ENCODE measurements at regions of chr10 and their contacts with region 1.

Region 1: GRCh38 chr10:17787078-17787961 is 21.8 kb upstream of the MRC1 start:
- DNase-seq: peak; percentile 54 to 86
- H3K4me3 ChIP-seq: no peak overlapping the region
- H3K27ac ChIP-seq: no peak overlapping the region
- H3K4me1 ChIP-seq: peaks cover 9% of the 10 kb centered on the region
- H3K27me3 ChIP-seq: no peaks in the 10 kb centered on the region
- CTCF ChIP-seq: no peak

Region 2: DNA sequence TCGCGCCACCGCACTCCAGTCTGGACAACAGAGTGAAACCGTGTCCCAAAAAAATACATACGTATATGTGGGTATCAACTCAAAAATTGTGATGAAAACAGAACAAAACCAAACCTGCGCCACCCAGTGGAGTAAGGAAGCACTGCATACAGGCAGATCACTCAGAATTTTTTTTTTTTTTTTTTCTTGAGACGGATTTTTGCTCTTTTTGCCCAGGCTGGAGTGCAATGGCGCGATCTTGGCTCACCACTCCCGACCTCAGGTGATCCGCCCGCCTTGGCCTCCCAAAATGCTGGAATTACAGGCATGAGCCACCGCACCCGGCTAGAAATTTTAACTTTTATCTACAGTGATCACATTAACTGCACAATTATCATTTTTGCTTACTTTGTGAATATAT is 44.4 kb before region 1 on chr10:
- CTCF ChIA-PET with region 1: no interaction called
- POLR2A ChIA-PET with region 1: no interaction called
- intact Hi-C with region 1: loop called (anchors 5 kb)
- DNase-seq: peak; percentile 45 to 50
- H3K4me3 ChIP-seq: peak overlapping the region; percentile 29; the same call in 1 of the 2 replicates
- H3K27ac ChIP-seq: no peak overlapping the region
- H3K4me1 ChIP-seq: no peaks in the 10 kb centered on the region
- H3K27me3 ChIP-seq: no peaks in the 10 kb centered on the region
- CTCF ChIP-seq: peak; percentile 83

Region 3: DNA sequence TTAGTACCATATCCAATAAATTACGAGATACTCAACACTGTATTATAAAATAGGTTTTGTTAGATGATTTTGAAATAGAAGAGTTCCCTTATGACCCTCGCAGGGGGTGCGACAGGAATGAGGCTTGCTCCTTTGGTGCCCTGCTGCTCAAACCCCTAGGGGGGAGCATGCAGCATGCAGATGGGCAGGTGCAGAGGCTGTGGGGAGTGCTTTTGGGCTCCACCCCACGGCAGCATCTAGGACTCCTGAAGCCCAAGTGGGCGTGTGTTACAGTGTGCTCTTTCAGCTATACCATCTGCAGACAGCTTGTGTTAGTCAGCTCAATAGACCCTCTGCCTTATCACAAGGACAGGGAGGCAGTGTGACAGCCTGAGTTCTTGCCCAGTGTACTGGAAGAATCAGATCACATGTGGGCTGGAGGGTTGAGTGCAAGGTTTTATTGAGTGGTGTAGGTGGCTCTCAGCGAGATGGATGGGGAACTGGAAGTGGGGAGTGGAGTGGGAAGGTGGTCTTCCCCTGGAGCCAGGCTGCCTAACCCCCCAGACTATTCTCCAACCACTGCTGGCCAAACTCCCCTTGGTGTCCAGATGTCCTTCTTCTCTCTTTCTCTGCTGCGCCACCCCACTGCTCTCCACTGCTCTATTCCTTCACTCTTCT is 18.7 kb after region 1 on chr10:
- CTCF ChIA-PET with region 1: no interaction called
- POLR2A ChIA-PET with region 1: no interaction called
- intact Hi-C with region 1: no loop called
- DNase-seq: peak in 1 of 2 experiments; percentile 12
- H3K4me3 ChIP-seq: no peak overlapping the region
- H3K27ac ChIP-seq: no peak overlapping the region
- H3K4me1 ChIP-seq: no peaks in the 10 kb centered on the region
- H3K27me3 ChIP-seq: no peaks in the 10 kb centered on the region
- CTCF ChIP-seq: 0 out of 2 replicates have a peak, but pooled peaks have one; percentile 15

Region 4: GRCh38 chr10:17836942-17837341 is 49.6 kb after region 1 on chr10:
- CTCF ChIA-PET with region 1: no interaction called
- POLR2A ChIA-PET with region 1: no interaction called
- intact Hi-C with region 1: loop called (anchors 1 kb)
- DNase-seq: peak in 1 of 2 experiments; percentile 60
- H3K4me3 ChIP-seq: no peak overlapping the region
- H3K27ac ChIP-seq: no peak overlapping the region
- H3K4me1 ChIP-seq: peaks cover 9% of the 10 kb centered on the region
- H3K27me3 ChIP-seq: no peaks in the 10 kb centered on the region
- CTCF ChIP-seq: no peak

Region 5: DNA sequence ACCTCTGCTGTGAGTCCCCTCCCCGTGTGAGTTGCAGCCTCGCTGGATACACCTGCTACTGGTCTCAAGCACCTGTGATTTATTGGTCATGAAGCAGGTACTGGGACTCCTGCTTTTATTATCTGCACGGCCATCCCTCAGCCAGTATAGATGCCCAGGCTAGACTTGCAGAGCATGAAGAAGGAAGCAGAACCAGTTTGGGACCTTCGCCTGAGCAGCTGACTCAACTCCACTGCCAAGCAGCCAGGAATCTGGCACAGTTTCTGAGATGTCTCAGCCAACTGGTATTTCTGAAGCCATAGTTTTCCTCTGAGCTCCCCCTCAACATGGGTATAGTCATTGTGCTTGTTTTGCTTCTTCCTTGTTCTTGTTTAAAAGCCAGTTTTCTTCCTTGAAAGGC is 136.4 kb after region 1 on chr10:
- CTCF ChIA-PET with region 1: no interaction called
- POLR2A ChIA-PET with region 1: no interaction called
- intact Hi-C with region 1: loop called (anchors 1 kb)
- DNase-seq: peak; percentile 86 to 87
- H3K4me3 ChIP-seq: no peak overlapping the region; the same call in 1 of the 2 replicates
- H3K27ac ChIP-seq: peak overlapping the region; percentile 86
- H3K4me1 ChIP-seq: peaks cover 20% of the 10 kb centered on the region
- H3K27me3 ChIP-seq: no peaks in the 10 kb centered on the region
- CTCF ChIP-seq: no peak

Measured in PC-9 (cell line).